ENCODE measurements at regions of chr17 and their contacts with region 1.

Region 1: DNA sequence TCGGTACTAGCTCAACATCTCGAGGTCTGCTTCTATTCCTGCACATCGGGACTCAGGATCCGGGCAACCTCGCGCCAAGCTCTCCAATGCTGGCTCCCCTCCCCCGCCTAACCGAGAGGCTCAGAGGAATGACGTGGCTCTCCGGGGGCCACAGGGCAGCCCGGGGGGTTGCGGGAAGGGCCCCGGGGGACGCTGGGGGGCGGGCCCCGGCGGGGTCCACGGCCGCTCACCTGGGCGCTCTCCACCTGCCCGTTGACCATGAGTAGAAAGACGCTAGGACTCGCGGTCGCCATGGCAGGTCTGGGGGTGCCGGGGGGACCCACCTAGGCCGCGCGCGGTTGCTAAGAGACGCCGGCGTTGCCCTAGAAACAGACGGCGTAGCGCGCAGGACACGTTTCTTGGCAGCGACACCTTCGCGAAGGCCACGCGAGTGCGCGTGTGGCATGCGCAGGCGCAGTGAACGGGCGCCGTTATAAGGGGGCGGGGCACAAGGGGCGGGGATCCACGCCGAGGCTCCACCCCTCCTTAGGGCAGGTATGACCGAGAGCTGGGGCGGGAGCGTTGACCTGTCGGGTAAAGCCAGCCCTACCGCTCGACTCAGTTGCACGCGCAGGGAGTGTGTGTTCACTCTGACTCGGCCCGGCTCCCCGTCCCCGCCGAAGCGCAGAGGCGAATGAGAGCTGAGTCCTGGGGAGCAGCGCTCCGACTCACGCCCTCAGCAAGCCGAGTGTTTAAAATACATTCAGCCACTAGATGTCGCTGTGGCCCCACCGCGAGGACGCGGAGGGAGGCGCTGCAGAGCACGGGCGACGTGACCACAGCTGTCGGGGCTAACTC is at the start of gene B9D1:
- DNase-seq: peak; percentile 94
- ATAC-seq: peak; percentile 82
- H3K4me3 Mint-ChIP-seq: peak within 1 kb of the TSS; percentile 83
- H3K27ac Mint-ChIP-seq: peak within 1 kb of the TSS; percentile 73
- H3K4me1 Mint-ChIP-seq: peaks cover 22% of the 10 kb centered on the region
- H3K27me3 Mint-ChIP-seq: no peaks in the 10 kb centered on the region
- CTCF ChIP-seq: peak; percentile 96
- total RNA-seq, gene B9D1: 31.9 to 39.2 TPM (median 39.0 TPM) in 3 replicates

Region 2: DNA sequence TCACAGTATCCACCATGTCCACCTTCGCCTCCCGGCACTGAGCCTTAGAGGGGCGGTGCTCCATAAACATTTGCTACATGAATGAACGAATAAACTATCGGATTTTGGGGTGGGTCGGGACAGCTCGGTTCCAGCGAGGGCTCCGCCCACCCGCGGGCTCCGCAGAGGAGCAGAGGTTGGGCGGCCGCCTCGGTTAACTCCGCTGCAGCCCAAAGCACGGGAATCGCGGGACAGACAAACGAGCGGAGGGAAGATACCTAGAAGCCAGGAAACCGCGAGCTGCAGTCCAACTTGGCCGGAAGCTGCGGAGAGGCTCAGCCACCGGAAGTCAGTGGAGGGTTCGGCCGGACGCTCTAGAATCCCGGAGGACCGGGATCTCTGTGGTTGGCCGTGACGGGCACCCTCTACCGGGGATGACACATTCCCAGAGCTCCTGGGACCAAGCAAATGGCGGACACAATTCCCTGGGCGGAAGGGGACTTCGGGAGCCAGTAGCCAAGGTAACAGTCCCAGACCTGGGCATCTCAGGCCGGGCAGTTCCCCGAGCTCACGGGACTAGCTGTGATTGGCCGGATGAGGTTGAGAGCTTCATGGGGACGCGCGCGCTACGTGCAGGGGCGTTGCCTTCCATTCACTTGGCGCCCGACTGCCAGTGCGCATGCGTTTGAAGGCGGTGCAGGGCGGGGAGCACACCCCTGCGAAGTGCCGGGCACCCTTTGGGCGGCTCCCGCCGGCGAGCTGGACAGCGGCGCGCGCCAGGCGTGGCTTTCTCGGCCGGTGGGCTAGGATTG is 15.3 kb after region 1 on chr17:
- CTCF ChIA-PET with region 1: interaction called, 87 read pairs
- POLR2A ChIA-PET with region 1: interaction called, 14 read pairs
- DNase-seq: peak; percentile 99
- ATAC-seq: peak; percentile 93
- H3K4me3 Mint-ChIP-seq: peak overlapping the region; percentile 99
- H3K27ac Mint-ChIP-seq: peak overlapping the region; percentile 97
- H3K4me1 Mint-ChIP-seq: peaks cover 16% of the 10 kb centered on the region
- H3K27me3 Mint-ChIP-seq: no peaks in the 10 kb centered on the region
- CTCF ChIP-seq: no peak

Region 3: DNA sequence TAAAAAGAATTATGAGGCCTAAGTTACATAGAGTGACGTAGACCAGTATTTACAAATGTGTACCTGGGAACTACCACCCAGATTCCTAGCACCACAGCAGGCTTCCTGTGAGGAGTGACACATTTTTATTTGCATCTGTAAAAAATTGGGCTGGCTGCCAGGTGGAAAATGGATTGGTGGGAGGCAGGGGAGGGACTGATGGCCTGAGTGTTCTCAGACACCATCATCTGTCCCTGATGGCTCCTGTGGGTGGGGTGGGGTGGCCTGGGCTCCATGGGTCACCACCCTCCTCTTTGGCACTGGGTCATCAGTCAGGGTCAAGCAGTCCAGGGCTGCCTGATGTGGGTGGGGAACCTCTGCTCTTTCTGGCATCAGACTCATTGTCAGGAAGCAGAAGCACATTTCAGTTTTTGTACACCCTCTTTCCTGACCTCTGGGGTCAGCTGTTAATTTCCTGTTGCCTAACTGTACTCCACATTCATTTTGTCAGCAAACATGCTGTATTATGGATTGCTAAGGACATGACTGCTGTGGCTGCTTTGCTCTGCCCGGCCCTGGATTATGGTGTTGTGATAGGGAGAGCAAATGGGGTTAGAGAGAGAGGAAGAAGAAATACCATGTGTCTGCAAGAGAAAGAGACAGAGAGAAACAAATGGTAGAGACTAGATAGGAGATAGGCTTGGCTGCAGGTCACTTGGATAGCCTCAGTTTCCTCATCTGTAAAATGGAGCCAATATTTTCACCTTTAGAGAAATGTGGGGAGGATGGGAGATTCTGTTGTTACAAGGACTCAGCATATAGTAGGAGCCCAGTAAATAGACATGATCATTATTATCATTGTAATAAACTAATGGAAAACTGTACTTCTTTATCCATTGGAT is 36.0 kb after region 1 on chr17:
- CTCF ChIA-PET with region 1: interaction called, 23 read pairs
- POLR2A ChIA-PET with region 1: no interaction called
- DNase-seq: no peak
- ATAC-seq: no peak
- H3K4me3 Mint-ChIP-seq: no peak overlapping the region
- H3K27ac Mint-ChIP-seq: peak overlapping the region; percentile 51; the same call in 1 of the 2 replicates
- H3K4me1 Mint-ChIP-seq: peaks cover 11% of the 10 kb centered on the region
- H3K27me3 Mint-ChIP-seq: no peaks in the 10 kb centered on the region; the same call in 1 of the 2 replicates
- CTCF ChIP-seq: no peak

Region 4: GRCh38 chr17:19460700-19461099 is 98.2 kb after region 1 on chr17:
- CTCF ChIA-PET with region 1: interaction called, 42 read pairs
- POLR2A ChIA-PET with region 1: interaction called, 4 read pairs
- DNase-seq: no peak
- ATAC-seq: peak; percentile 9
- H3K4me3 Mint-ChIP-seq: peak overlapping the region; percentile 21
- H3K27ac Mint-ChIP-seq: peak overlapping the region; percentile 83
- H3K4me1 Mint-ChIP-seq: peaks cover 90% of the 10 kb centered on the region
- H3K27me3 Mint-ChIP-seq: no peaks in the 10 kb centered on the region
- CTCF ChIP-seq: no peak

Region 5: GRCh38 chr17:19546289-19547065 is 184.0 kb after region 1 on chr17:
- CTCF ChIA-PET with region 1: interaction called, 10 read pairs
- POLR2A ChIA-PET with region 1: no interaction called
- DNase-seq: peak; percentile 23
- ATAC-seq: no peak
- H3K4me3 Mint-ChIP-seq: no peak overlapping the region
- H3K27ac Mint-ChIP-seq: no peak overlapping the region
- H3K4me1 Mint-ChIP-seq: peaks cover 29% of the 10 kb centered on the region
- H3K27me3 Mint-ChIP-seq: no peaks in the 10 kb centered on the region
- CTCF ChIP-seq: no peak

Region 6: GRCh38 chr17:19718604-19719354 is 356.3 kb after region 1 on chr17:
- CTCF ChIA-PET with region 1: interaction called, 18 read pairs
- POLR2A ChIA-PET with region 1: interaction called, 3 read pairs
- DNase-seq: peak; percentile 75
- ATAC-seq: peak; percentile 82
- H3K4me3 Mint-ChIP-seq: no peak overlapping the region
- H3K27ac Mint-ChIP-seq: no peak overlapping the region
- H3K4me1 Mint-ChIP-seq: peaks cover 6% of the 10 kb centered on the region; the same call in 1 of the 2 replicates
- H3K27me3 Mint-ChIP-seq: no peaks in the 10 kb centered on the region; the same call in 1 of the 2 replicates
- CTCF ChIP-seq: peak; percentile 18; the same call in 1 of the 2 replicates

Measured in WTC11 (cell line).